Activated CD4-positive, alpha-beta memory T cell treated with anti-CD3 and anti-CD28 coated beads for 36 hours (primary cell): ENCODE measurements at regions of chr12 and their contacts with region 1.

Region 1: GRCh38 chr12:11171145-11171968 is at the start of gene SMIM10L1:
- DNase-seq: peak; percentile 93
- H3K4me3 Mint-ChIP-seq: peak within 1 kb of the TSS; percentile 96
- H3K27ac Mint-ChIP-seq: peak within 1 kb of the TSS; percentile 99
- H3K4me1 Mint-ChIP-seq: peaks cover 42% of the 10 kb centered on the region
- H3K27me3 Mint-ChIP-seq: no peaks in the 10 kb centered on the region
- total RNA-seq, gene SMIM10L1: 5.9 to 6.5 TPM

Region 2: GRCh38 chr12:10771132-10771733 is 400.1 kb before region 1 on chr12:
- CTCF ChIA-PET with region 1: interaction called, 10 read pairs
- POLR2A ChIA-PET with region 1: no interaction called
- intact Hi-C with region 1: no loop called
- DNase-seq: no peak
- H3K4me3 Mint-ChIP-seq: no peak overlapping the region
- H3K27ac Mint-ChIP-seq: no peak overlapping the region
- H3K4me1 Mint-ChIP-seq: no peaks in the 10 kb centered on the region
- H3K27me3 Mint-ChIP-seq: peaks cover 28% of the 10 kb centered on the region

Region 3: GRCh38 chr12:10982244-10982643 is 189.1 kb before region 1 on chr12:
- CTCF ChIA-PET with region 1: no interaction called
- POLR2A ChIA-PET with region 1: no interaction called
- intact Hi-C with region 1: loop called (anchors 2 kb)
- DNase-seq: peak; percentile 28
- H3K4me3 Mint-ChIP-seq: no peak overlapping the region
- H3K27ac Mint-ChIP-seq: no peak overlapping the region
- H3K4me1 Mint-ChIP-seq: peaks cover 22% of the 10 kb centered on the region
- H3K27me3 Mint-ChIP-seq: peaks cover 16% of the 10 kb centered on the region

Region 4: DNA sequence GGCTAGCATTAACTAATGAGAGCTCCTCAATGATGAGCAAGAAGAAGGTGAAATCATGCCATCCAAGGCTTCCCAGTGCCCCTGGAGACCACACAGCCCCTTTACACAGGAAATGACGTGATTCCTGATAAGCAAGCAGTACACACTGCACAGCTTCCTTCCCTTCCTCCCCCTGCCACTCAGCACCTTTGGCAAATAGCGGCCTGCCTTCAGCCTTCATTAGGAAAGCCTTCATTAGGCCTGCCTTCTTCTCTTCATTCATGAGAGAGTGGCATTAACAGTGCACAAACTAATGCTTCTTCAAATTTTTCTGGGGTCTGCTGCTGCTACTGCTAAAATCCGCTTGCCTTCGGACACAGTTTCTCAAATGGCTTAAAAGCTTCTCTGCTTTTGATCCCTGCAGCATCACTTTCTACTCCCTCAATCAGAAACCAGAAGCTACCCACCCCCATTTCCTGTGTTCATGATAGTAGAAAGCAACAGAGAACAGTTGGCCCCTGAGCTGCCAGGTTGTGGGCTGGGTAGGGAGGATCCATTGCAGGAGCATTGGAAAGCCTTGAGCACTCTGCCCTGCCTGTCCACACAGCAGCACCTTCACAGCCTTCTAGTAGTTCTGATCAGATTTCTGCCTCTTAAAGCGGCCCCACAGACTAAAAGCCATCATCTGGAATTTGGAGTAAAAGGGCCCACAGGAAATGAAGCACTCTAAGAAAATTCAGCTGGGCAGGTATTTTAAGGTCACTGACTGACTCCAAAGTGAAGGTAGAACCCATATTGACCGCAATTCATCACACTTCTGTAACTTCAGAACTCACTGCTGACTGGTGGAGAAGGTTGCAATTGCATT is 374.4 kb after region 1 on chr12:
- CTCF ChIA-PET with region 1: no interaction called
- POLR2A ChIA-PET with region 1: no interaction called
- intact Hi-C with region 1: loop called (anchors 1 kb)
- DNase-seq: peak; percentile 59
- H3K4me3 Mint-ChIP-seq: peak overlapping the region; percentile 14
- H3K27ac Mint-ChIP-seq: peak overlapping the region; percentile 72
- H3K4me1 Mint-ChIP-seq: peaks cover 42% of the 10 kb centered on the region
- H3K27me3 Mint-ChIP-seq: no peaks in the 10 kb centered on the region